Endothelial cell of umbilical vein (primary cell): ENCODE measurements at regions of chr19 and their contacts with region 1.

Region 1: GRCh38 chr19:16041299-16041990 is 34.9 kb upstream of the TPM4 start:
- DNase-seq: peak; percentile 74
- H3K4me3 ChIP-seq: no peak overlapping the region
- H3K27ac ChIP-seq: no peak overlapping the region
- H3K4me1 ChIP-seq: peaks cover 12% of the 10 kb centered on the region
- H3K27me3 ChIP-seq: no peaks in the 10 kb centered on the region
- CTCF ChIP-seq: peak; percentile 91 to 95
- POLR2A ChIP-seq: no peak

Region 2: GRCh38 chr19:16062789-16063188 is 21.3 kb after region 1 on chr19:
- CTCF ChIA-PET with region 1: interaction called, 84 read pairs
- POLR2A ChIA-PET with region 1: no interaction called
- dilution Hi-C with region 1: no loop called
- intact Hi-C with region 1: loop called (anchors 1 kb)
- DNase-seq: peak; percentile 45
- H3K4me3 ChIP-seq: no peak overlapping the region
- H3K27ac ChIP-seq: no peak overlapping the region
- H3K4me1 ChIP-seq: peaks cover 21% of the 10 kb centered on the region
- H3K27me3 ChIP-seq: no peaks in the 10 kb centered on the region
- CTCF ChIP-seq: peak; percentile 85 to 87
- POLR2A ChIP-seq: no peak

Region 3: DNA sequence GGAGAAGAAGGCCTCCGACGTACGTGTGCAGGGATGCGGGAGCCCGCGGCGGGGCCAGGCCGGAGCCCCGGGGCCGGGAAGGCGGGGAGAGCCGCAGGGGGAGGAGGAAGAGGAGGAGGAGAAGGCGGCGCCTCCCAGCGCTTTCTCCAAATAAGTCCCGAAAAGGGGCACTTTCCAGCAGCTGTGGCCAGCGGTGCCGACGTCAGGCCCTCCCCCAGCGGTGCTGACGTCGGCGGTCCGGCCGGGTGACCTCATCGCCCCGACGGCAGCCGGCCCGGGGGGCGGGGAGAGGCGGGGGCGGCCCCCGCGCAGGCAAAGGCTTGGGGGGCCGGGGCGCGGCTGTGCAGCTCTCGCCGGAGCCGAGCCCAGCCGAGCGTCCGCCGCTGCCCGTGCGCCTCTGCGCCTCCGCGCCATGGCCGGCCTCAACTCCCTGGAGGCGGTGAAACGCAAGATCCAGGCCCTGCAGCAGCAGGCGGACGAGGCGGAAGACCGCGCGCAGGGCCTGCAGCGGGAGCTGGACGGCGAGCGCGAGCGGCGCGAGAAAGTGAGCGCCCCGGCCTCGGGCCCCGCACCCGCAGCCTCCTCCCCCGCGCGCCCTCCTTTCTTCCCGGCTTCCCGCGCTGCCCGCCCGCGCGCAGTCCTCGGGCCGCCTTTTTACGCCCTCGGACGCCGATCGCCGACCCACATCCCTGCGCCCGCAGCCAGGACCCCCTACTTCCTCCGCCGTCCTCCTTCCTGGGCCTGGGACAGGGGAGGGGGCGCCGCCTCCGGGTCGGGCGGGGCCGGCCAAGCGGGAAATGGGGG is 34.9 kb after region 1 on chr19 and contains the start of gene TPM4:
- CTCF ChIA-PET with region 1: interaction called, 40 read pairs
- POLR2A ChIA-PET with region 1: interaction called, 7 read pairs
- dilution Hi-C with region 1: no loop called
- intact Hi-C with region 1: loop called (anchors 1 kb)
- DNase-seq: peak; percentile 90
- H3K4me3 ChIP-seq: peak within 1 kb of the TSS; percentile 64 to 96 (median 95)
- H3K27ac ChIP-seq: peak within 1 kb of the TSS; percentile 100
- H3K4me1 ChIP-seq: peaks cover 39% of the 10 kb centered on the region
- H3K27me3 ChIP-seq: no peaks in the 10 kb centered on the region
- CTCF ChIP-seq: no peak
- POLR2A ChIP-seq: peak; percentile 89
- total RNA-seq, gene TPM4: 875 and 924 TPM in 2 replicates

Region 4: DNA sequence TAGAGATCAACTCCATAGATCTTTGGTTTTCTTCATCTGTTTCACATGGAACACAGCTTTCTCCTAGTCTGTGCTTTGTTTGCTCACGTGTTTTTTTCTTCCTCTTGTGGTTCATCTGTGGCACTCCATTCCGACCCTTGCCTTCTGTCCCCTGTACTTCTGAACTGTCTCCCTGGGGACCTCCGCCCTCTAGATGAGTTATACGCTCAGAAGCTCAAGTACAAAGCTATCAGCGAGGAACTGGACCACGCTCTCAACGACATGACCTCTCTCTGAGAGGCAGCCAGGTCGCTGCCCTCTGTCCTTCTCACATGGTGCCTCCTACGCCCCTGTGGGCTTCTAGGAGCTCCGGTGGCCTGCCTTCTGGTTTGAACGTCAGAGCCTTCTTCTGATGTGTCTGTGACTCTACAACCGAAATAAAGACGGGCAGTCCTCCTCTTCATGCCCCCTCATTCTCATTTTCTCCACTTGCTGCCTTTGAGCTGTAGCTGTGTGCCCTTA is 53.7 kb after region 1 on chr19:
- CTCF ChIA-PET with region 1: interaction called, 39 read pairs
- POLR2A ChIA-PET with region 1: no interaction called
- dilution Hi-C with region 1: no loop called
- intact Hi-C with region 1: no loop called
- DNase-seq: no peak
- H3K4me3 ChIP-seq: no peak overlapping the region
- H3K27ac ChIP-seq: no peak overlapping the region
- H3K4me1 ChIP-seq: peaks cover 13% of the 10 kb centered on the region
- H3K27me3 ChIP-seq: no peaks in the 10 kb centered on the region
- CTCF ChIP-seq: no peak
- POLR2A ChIP-seq: no peak

Region 5: GRCh38 chr19:16125737-16126495 is 84.5 kb after region 1 on chr19:
- CTCF ChIA-PET with region 1: interaction called, 10 read pairs
- POLR2A ChIA-PET with region 1: no interaction called
- dilution Hi-C with region 1: no loop called
- intact Hi-C with region 1: no loop called
- DNase-seq: no peak
- H3K4me3 ChIP-seq: no peak overlapping the region
- H3K27ac ChIP-seq: no peak overlapping the region
- H3K4me1 ChIP-seq: no peaks in the 10 kb centered on the region
- H3K27me3 ChIP-seq: no peaks in the 10 kb centered on the region
- CTCF ChIP-seq: no peak
- POLR2A ChIP-seq: no peak